ENCODE measurements at regions of chr1 and their contacts with region 1.

Region 1: GRCh38 chr1:202009326-202010179 is 834 bp upstream of the ELF3 start:
- DNase-seq: peak; percentile 46 to 79 (median 63)
- ATAC-seq: peak; percentile 68 to 75
- H3K4me3 ChIP-seq: no peak overlapping the region
- H3K27ac ChIP-seq: no peak overlapping the region
- H3K4me1 ChIP-seq: no peaks in the 10 kb centered on the region
- H3K27me3 ChIP-seq: no peaks in the 10 kb centered on the region

Region 2: GRCh38 chr1:202122639-202123335 is 113.2 kb after region 1 on chr1 and contains the start of gene GPR37L1:
- intact Hi-C with region 1: loop called (anchors 2 to 5 kb)
- DNase-seq: peak; percentile 72 to 87 (median 87)
- ATAC-seq: peak; percentile 73 to 75
- H3K4me3 ChIP-seq: no peak within 1 kb of the TSS
- H3K27ac ChIP-seq: no peak within 1 kb of the TSS
- H3K4me1 ChIP-seq: no peaks in the 10 kb centered on the region
- H3K27me3 ChIP-seq: no peaks in the 10 kb centered on the region
- total RNA-seq, gene GPR37L1: 0.06 to 0.21 (median 0.11) TPM in 3 of 4 donors, not detected in the other

Region 3: GRCh38 chr1:202135221-202135721 is 125.7 kb after region 1 on chr1:
- intact Hi-C with region 1: loop called in 2 of 4 experiments (anchors 5 kb)
- DNase-seq: peak; percentile 42 to 71 (median 71)
- ATAC-seq: peak; percentile 43 to 49
- H3K4me3 ChIP-seq: no peak overlapping the region
- H3K27ac ChIP-seq: no peak overlapping the region
- H3K4me1 ChIP-seq: peaks cover 9% of the 10 kb centered on the region
- H3K27me3 ChIP-seq: no peaks in the 10 kb centered on the region

Region 4: DNA sequence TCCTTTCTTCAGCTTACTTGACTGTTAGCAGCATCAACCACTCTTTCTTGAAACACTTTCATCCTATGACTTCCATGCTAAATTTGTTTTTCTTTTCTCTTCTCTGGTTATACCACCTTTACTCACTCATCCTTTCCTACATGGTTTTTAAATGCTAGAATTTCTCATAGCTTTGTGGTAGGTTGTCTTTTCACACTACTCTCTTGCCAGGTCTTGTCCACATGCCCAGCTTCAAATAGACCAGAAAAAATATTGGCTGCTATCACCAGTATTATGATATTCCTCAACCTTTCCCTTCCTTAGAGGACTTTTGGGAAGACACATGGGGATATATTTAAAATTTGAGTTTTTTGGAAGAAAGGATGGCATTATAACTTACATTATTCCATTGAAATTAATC is 387.7 kb after region 1 on chr1:
- intact Hi-C with region 1: no loop called
- DNase-seq: no peak
- ATAC-seq: no peak
- H3K4me3 ChIP-seq: no peak overlapping the region
- H3K27ac ChIP-seq: no peak overlapping the region
- H3K4me1 ChIP-seq: peaks cover 5% of the 10 kb centered on the region
- H3K27me3 ChIP-seq: no peaks in the 10 kb centered on the region